HCT116 (cell line): ENCODE measurements at regions of chr3 and their contacts with region 1.

Region 1: DNA sequence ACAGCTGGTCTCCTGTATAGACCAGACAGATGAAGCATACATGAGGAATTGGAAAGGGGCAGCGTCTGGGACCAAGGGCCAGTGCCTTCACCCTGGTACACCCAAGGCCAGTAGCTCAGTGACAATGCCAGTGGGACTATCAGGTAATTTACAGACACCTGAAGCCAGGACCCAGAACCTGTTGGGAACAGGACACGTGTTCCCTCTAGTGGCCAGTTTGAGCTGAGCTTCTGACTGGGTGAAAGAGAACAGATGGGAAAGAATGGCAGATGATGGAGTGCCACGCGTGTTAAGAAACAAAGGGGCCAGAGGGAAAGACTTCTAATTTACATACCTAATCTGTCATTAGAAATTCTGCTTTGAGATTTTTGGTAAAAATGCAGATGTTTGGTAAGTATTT is 5.1 kb upstream of the SLC25A38 start:
- DNase-seq: peak; percentile 45
- ATAC-seq: peak; percentile 90
- H3K4me3 ChIP-seq: no peak overlapping the region
- H3K27ac ChIP-seq: no peak overlapping the region
- H3K4me1 ChIP-seq: peaks cover 4 to 8% of the 10 kb centered on the region in 2 experiments; a peak in 3 of 4 replicates
- H3K27me3 ChIP-seq: peaks cover 21% of the 10 kb centered on the region; the same call in 1 of the 2 replicates
- CTCF ChIP-seq: peak; percentile 54 to 89 (median 86)
- POLR2A ChIP-seq: no peak
- RAD21 ChIP-seq: peak; percentile 73

Region 2: GRCh38 chr3:39021029-39021428 is 357.1 kb before region 1 on chr3:
- CTCF ChIA-PET with region 1: no interaction called
- POLR2A ChIA-PET with region 1: no interaction called
- RAD21 ChIA-PET with region 1: no interaction called
- intact Hi-C with region 1: no loop called
- DNase-seq: no peak
- ATAC-seq: no peak
- H3K4me3 ChIP-seq: no peak overlapping the region
- H3K27ac ChIP-seq: no peak overlapping the region
- H3K4me1 ChIP-seq: no peaks in the 10 kb centered on the region
- H3K27me3 ChIP-seq: peaks cover 20% of the 10 kb centered on the region
- CTCF ChIP-seq: no peak
- POLR2A ChIP-seq: no peak
- RAD21 ChIP-seq: no peak

Region 3: DNA sequence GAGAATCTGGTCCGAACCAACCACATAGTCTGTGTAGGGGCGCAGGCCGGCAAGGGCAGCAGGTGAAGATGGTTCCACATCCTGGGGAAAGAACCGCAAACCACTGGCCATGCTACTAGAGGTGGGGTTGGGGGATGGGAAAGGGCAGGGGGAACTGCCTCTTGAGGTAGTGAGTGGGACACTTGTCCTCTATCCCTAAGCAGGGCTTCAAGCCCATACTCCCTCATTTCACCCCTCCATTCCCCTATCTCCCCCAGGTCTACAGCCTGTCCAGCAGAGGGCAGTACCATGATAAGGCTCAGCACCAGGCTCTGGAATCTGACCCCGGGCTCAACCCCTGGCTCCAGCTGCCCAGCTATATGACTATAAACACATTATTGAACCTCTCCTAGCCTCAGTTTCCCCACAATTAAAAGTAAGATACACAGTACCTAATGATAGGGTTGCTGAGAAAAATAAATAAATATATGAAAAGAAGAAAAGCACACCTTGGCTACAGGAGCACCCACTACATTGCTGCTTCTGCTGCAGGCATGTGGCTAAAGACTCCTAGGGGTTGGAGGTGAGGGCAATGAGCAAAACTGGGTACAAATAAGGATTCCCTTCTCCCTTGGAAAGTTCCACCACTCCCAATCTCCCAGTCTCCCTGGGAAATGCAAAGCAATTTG is 276.9 kb before region 1 on chr3:
- CTCF ChIA-PET with region 1: no interaction called
- POLR2A ChIA-PET with region 1: no interaction called
- RAD21 ChIA-PET with region 1: no interaction called
- intact Hi-C with region 1: loop called (anchors 2 kb)
- DNase-seq: no peak
- ATAC-seq: peak; percentile 87
- H3K4me3 ChIP-seq: no peak overlapping the region
- H3K27ac ChIP-seq: no peak overlapping the region
- H3K4me1 ChIP-seq: peaks cover 7 to 8% of the 10 kb centered on the region in 2 experiments
- H3K27me3 ChIP-seq: no peaks in the 10 kb centered on the region
- CTCF ChIP-seq: peak; percentile 69 to 88 (median 81); a peak in 5 of 6 replicates
- POLR2A ChIP-seq: no peak
- RAD21 ChIP-seq: peak; percentile 80

Region 4: GRCh38 chr3:39189959-39190269 is 188.2 kb before region 1 on chr3:
- CTCF ChIA-PET with region 1: interaction called, 15 read pairs
- POLR2A ChIA-PET with region 1: no interaction called
- RAD21 ChIA-PET with region 1: no interaction called
- intact Hi-C with region 1: loop called (anchors 1 kb)
- DNase-seq: peak; percentile 53
- ATAC-seq: peak; percentile 82
- H3K4me3 ChIP-seq: no peak overlapping the region
- H3K27ac ChIP-seq: no peak overlapping the region
- H3K4me1 ChIP-seq: peaks cover 0 to 21% of the 10 kb centered on the region in 2 experiments; a peak in 1 of 4 replicates
- H3K27me3 ChIP-seq: no peaks in the 10 kb centered on the region
- CTCF ChIP-seq: peak; percentile 72 to 84 (median 72); a peak in 5 of 6 replicates
- POLR2A ChIP-seq: no peak
- RAD21 ChIP-seq: peak; percentile 87

Region 5: DNA sequence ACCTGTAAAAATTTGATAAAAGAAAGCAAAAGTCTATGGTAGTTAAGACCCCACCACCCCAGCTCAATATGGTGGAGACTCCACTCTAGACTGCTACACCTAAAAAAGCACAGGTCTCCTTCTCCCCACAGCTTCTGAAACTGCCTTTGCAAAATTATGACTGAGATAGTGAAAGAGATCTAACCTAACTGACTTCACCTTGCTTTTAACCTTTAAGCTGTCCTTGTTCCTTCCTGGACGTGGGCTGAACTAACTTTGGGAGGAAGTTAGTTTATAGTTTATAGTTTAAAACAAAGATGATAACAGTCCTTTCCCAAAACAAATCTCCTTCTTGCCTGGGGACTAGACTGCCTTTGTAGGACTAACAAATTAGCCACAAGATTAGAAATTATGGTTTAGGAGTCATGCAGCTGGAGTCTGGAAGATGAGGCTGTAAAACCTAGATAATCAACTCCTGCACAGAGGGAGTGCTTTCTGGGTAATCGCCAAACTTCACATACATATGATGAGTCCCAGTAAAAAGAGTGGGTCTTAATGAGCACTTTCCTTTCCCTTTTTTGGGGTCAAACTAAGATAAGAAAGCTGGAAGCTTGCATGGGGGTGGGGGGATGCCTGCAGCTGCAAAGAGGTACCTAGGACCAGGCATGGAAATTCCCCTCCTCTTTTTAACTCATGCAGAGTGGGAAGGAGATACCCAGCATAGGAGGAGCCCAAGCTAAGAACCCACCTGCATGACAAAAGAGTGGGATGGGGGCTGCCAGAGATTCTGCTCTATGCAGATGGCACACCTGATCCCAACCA is 31.1 kb before region 1 on chr3:
- CTCF ChIA-PET with region 1: no interaction called
- POLR2A ChIA-PET with region 1: no interaction called
- RAD21 ChIA-PET with region 1: no interaction called
- intact Hi-C with region 1: no loop called
- DNase-seq: no peak
- ATAC-seq: no peak
- H3K4me3 ChIP-seq: no peak overlapping the region
- H3K27ac ChIP-seq: no peak overlapping the region
- H3K4me1 ChIP-seq: no peaks in the 10 kb centered on the region
- H3K27me3 ChIP-seq: peaks cover 24% of the 10 kb centered on the region
- CTCF ChIP-seq: no peak
- POLR2A ChIP-seq: no peak
- RAD21 ChIP-seq: no peak

Region 6: GRCh38 chr3:39468108-39468436 is 90.0 kb after region 1 on chr3:
- CTCF ChIA-PET with region 1: no interaction called
- POLR2A ChIA-PET with region 1: no interaction called
- RAD21 ChIA-PET with region 1: no interaction called
- intact Hi-C with region 1: no loop called
- DNase-seq: no peak
- ATAC-seq: no peak
- H3K4me3 ChIP-seq: no peak overlapping the region
- H3K27ac ChIP-seq: no peak overlapping the region
- H3K4me1 ChIP-seq: no peaks in the 10 kb centered on the region
- H3K27me3 ChIP-seq: no peaks in the 10 kb centered on the region
- CTCF ChIP-seq: 0 out of 6 replicates have a peak, but pooled peaks of 2 of the 3 experiments have one; percentile 8 to 20
- POLR2A ChIP-seq: no peak
- RAD21 ChIP-seq: no peak

Region 7: GRCh38 chr3:40780291-40780924 is 1402.3 kb after region 1 on chr3:
- CTCF ChIA-PET with region 1: no interaction called
- POLR2A ChIA-PET with region 1: no interaction called
- RAD21 ChIA-PET with region 1: no interaction called
- intact Hi-C with region 1: no loop called
- DNase-seq: no peak
- ATAC-seq: no peak
- H3K4me3 ChIP-seq: no peak overlapping the region
- H3K27ac ChIP-seq: no peak overlapping the region
- H3K4me1 ChIP-seq: no peaks in the 10 kb centered on the region
- H3K27me3 ChIP-seq: peaks cover 39% of the 10 kb centered on the region
- CTCF ChIP-seq: no peak
- POLR2A ChIP-seq: no peak
- RAD21 ChIP-seq: no peak